Activated naive CD4-positive, alpha-beta T cell treated with anti-CD3 and anti-CD28 coated beads for 36 hours (primary cell): ENCODE measurements at regions of chr17 and their contacts with region 1.

Region 1: DNA sequence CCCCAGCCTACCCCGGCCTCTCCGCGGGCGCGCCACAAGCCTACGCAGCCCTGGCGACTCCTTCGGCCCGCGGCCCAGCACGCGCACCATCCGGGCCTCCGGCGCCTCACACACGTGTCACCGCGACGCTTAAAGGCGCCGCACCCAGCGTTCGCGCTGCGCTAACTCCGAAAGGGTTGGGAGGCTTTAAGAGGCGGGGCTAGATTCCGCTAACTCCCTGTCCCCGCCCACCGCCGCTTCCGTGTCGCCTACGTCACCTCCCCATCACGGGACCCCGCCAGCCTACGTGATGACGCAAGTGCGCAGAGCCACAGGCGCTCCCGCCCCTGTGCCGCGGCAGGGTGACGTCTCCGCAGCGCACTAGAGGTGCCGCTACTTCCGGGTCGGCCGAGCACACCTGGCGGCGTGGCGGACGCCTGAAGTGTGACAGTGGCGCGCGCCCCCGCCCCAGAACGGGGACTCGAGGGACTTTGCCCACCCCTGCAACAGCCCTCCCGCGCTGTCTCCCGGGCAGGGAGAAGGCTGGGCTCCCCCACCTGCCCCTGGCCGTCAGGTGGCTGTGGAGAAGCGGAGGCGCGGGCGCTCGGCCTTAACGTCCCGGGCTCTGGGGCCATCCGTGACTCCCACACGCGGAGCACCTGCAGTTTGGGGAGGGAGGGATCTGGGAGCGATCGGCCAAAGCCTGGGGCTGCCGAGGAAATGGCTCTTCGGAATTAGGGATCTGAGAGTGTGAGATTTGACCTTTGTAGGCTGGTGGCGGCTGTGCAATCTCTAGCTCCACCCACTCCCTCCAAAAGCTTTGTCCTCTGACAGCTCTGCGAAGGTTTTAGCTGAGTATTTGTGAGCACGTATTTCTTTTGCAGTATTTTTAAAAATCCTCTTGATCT is at the start of gene USP36:
- DNase-seq: peak; percentile 100
- H3K4me3 Mint-ChIP-seq: peak within 1 kb of the TSS; percentile 96
- H3K27ac Mint-ChIP-seq: peak within 1 kb of the TSS; percentile 93
- H3K4me1 Mint-ChIP-seq: peaks cover 44% of the 10 kb centered on the region
- H3K27me3 Mint-ChIP-seq: no peaks in the 10 kb centered on the region
- total RNA-seq, gene USP36: 65.3 to 68.7 TPM

Region 2: GRCh38 chr17:78818932-78819331 is 22.0 kb before region 1 on chr17:
- CTCF ChIA-PET with region 1: interaction called, 4 read pairs
- intact Hi-C with region 1: loop called (anchors 1 kb)
- DNase-seq: peak; percentile 66
- H3K4me3 Mint-ChIP-seq: peak overlapping the region; percentile 45
- H3K27ac Mint-ChIP-seq: peak overlapping the region; percentile 85
- H3K4me1 Mint-ChIP-seq: peaks cover 53% of the 10 kb centered on the region
- H3K27me3 Mint-ChIP-seq: no peaks in the 10 kb centered on the region